ENCODE measurements at regions of chr16 and their contacts with region 1.

Region 1: GRCh38 chr16:1194665-1195392 is 30.2 kb downstream of the TPSG1 start:
- DNase-seq: no peak
- H3K4me3 ChIP-seq: no peak overlapping the region
- H3K27ac ChIP-seq: no peak overlapping the region
- H3K4me1 ChIP-seq: no peaks in the 10 kb centered on the region
- H3K27me3 ChIP-seq: no peaks in the 10 kb centered on the region
- CTCF ChIP-seq: peak; percentile 81 to 88 (median 84)
- POLR2A ChIP-seq: no peak

Region 2: DNA sequence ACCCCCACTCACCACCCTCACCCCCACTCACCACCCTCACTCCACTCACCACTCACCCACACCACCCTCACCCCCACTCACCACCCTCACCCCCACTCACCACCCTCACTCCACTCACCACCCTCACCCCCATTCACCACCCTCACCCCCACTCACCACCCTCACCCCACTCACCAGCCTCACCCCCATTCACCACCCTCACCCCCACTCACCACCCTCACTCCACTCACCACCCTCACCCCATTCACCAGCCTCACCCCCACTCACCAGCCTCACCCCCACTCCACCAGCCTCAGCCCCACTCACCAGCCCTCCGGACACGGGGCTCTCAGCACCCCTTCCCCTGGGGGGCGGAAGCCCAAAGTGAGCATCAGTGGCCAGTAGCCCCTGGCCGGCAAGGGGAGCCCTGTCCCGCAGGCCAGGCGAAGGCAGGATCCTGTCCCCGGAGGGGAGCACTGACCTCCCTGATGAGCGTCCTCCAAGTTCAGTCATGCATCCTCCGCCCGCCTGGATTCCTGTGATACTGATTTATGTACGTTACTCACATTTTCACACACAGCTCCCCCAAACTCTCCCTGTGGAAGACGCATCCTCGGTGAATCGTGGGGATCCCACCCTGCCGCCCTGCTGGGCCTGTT is 80.8 kb before region 1 on chr16:
- intact Hi-C with region 1: loop called (anchors 5 kb)
- DNase-seq: no peak
- H3K4me3 ChIP-seq: no peak overlapping the region
- H3K27ac ChIP-seq: no peak overlapping the region
- H3K4me1 ChIP-seq: peaks cover 8% of the 10 kb centered on the region
- H3K27me3 ChIP-seq: no peaks in the 10 kb centered on the region
- CTCF ChIP-seq: no peak
- POLR2A ChIP-seq: no peak